Sigmoid colon (tissue), 7 donors: ENCODE measurements at regions of chr15 and their contacts with region 1.

Region 1: GRCh38 chr15:88897456-88898194 is 2.3 kb upstream of the HAPLN3 start:
- DNase-seq: peak; percentile 94
- H3K4me3 ChIP-seq: no peak overlapping the region
- H3K27ac ChIP-seq: peak overlapping the region; percentile 43 to 77 (median 62)
- H3K4me1 ChIP-seq: peaks cover 0 to 36% (median 32%) of the 10 kb centered on the region in 4 donors
- H3K27me3 ChIP-seq: peaks cover 11 to 33% (median 29%) of the 10 kb centered on the region in 3 donors
- CTCF ChIP-seq: peak; percentile 35 to 70 (median 55)
- EP300 ChIP-seq: no peak
- POLR2A ChIP-seq: no peak

Region 2: GRCh38 chr15:88476635-88477060 is 421.0 kb before region 1 on chr15:
- intact Hi-C with region 1: loop called (anchors 5 kb)
- DNase-seq: no peak
- H3K4me3 ChIP-seq: no peak overlapping the region
- H3K27ac ChIP-seq: peak overlapping the region in 3 of 4 donors; percentile 5 to 67 (median 53)
- H3K4me1 ChIP-seq: peaks cover 0 to 9% (median 6%) of the 10 kb centered on the region in 4 donors
- H3K27me3 ChIP-seq: no peaks in the 10 kb centered on the region
- CTCF ChIP-seq: peak; percentile 30 to 64 (median 50)
- EP300 ChIP-seq: no peak
- POLR2A ChIP-seq: no peak

Region 3: DNA sequence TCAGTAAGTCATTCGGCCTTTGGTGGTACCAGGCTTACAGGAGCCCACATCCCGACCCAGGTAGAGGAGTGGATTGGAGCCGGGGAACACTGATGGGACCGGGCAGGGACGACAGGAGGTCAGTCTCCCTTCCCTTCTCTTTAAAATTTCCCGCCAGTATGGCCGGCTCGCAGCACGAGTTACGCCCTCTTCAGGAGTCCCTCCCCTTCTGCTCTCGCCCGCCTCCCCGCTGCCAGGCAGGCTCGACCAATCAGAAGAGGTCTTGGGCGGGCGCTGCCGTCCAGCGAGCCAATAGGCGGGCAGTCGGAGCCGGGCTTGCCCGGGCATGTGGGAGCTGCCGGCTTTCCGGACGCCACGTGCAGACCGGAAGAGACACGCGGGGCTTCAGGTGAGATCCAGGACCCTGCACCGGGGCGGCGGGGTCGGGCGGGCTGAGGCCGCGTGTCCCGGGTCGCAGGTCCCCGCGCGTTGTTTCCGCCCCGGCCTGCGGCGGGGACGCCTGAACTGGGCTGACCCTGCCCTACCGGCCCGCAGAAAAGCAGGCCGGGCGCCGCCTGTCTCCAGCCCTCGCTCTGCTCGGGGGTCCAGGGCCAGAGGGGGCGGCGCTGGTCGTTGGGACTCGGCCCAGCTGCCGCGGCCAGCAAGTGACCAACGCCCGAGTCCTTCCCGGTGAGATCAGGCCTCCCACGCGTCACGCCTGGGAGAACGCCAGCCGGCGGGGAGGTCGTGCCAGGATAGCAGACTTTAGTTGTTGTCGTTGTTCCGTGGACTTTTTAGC is 276.4 kb before region 1 on chr15 and contains the start of gene AEN:
- intact Hi-C with region 1: loop called (anchors 5 kb)
- DNase-seq: peak; percentile 98
- H3K4me3 ChIP-seq: peak within 1 kb of the TSS; percentile 67 to 96 (median 94)
- H3K27ac ChIP-seq: peak within 1 kb of the TSS; percentile 82 to 93 (median 86)
- H3K4me1 ChIP-seq: peaks cover 0 to 44% (median 41%) of the 10 kb centered on the region in 4 donors
- H3K27me3 ChIP-seq: no peaks in the 10 kb centered on the region
- CTCF ChIP-seq: no peak
- EP300 ChIP-seq: no peak
- POLR2A ChIP-seq: no peak
- total RNA-seq, gene AEN: 5.8 to 18.3 (median 9.4) TPM

Region 4: DNA sequence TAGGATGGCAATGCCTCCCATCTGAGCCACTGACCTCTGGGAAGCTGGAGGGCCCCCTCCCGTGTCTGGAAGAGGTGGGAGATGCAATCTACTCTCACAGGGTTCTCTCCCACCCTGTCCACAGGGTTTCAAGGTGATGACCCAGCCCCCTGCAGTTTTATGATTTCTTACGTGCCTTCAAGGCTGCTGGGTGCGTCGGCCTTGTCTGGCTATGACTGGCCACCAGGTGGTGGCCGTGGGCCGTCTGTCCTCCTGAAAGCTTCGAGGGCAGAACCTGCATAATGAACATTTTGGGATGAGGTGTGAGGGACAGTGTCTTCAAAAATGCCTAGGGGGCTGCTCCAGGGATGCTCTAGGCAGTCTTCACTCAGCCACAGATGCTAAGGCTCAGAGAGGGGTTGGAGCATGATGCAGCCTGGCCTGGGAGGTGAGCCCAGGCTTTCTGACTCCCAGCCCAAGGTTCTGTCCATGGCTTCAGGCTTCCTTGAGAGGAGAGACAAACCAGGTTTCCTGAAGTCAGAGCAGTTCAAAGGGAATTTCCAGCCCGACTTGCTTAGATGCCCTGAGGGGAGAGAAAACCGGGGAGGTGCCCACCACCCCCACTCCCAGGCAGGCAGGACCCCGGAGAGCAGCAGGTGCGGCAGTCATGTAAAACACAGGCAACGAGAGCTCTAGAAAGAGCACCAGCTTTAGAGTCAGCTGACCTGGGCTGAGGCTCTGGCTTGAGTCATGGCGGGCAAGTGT is 240.1 kb before region 1 on chr15:
- intact Hi-C with region 1: loop called (anchors 5 kb)
- DNase-seq: peak; percentile 68
- H3K4me3 ChIP-seq: no peak overlapping the region
- H3K27ac ChIP-seq: no peak overlapping the region
- H3K4me1 ChIP-seq: peaks cover 0 to 10% (median 0%) of the 10 kb centered on the region in 4 donors
- H3K27me3 ChIP-seq: no peaks in the 10 kb centered on the region
- CTCF ChIP-seq: peak; percentile 31 to 64 (median 56)
- EP300 ChIP-seq: no peak
- POLR2A ChIP-seq: no peak

Region 5: GRCh38 chr15:88913017-88913849 is 15.6 kb after region 1 on chr15 and contains the start of gene MFGE8:
- intact Hi-C with region 1: no loop called
- DNase-seq: peak; percentile 85
- H3K4me3 ChIP-seq: peak within 1 kb of the TSS; percentile 62 to 83 (median 76)
- H3K27ac ChIP-seq: peak within 1 kb of the TSS; percentile 71 to 94 (median 80)
- H3K4me1 ChIP-seq: peaks cover 0 to 17% (median 13%) of the 10 kb centered on the region in 4 donors
- H3K27me3 ChIP-seq: no peaks in the 10 kb centered on the region
- CTCF ChIP-seq: peak in 1 of 4 experiments; percentile 9
- EP300 ChIP-seq: no peak
- POLR2A ChIP-seq: no peak
- total RNA-seq, gene MFGE8: 127 to 186 (median 174) TPM